PC-3 (cell line): ENCODE measurements at regions of chr12 and their contacts with region 1.

Region 1: GRCh38 chr12:19572920-19573558 is 133.7 kb downstream of the AEBP2 start:
- DNase-seq: peak; percentile 70
- ATAC-seq: peak; percentile 67
- H3K4me3 ChIP-seq: no peak overlapping the region
- H3K27ac ChIP-seq: no peak overlapping the region
- H3K4me1 ChIP-seq: peaks cover 7% of the 10 kb centered on the region; the same call in 1 of the 2 replicates
- H3K27me3 ChIP-seq: no peaks in the 10 kb centered on the region
- CTCF ChIP-seq: peak; percentile 77

Region 2: DNA sequence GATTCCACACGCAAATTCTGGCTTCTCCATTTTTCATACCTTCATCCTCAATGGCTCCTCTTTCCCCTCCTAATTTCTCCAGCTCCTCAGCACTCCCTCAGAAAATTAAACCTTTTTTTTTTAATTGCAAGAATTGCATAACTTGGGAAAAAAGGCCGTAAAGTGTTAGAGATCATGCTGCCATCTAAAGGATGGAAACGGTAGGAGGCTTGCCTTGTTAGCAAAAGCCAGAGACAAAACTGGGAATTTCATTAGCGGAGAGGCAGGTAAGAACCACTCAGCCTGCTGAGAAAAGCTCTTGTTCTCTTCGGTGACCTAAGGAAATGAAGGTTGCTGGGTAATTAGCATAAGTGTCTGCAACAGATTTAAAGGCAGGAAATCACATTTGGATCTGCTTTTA is 70.6 kb after region 1 on chr12:
- CTCF ChIA-PET with region 1: no interaction called
- POLR2A ChIA-PET with region 1: no interaction called
- intact Hi-C with region 1: loop called (anchors 1 kb)
- DNase-seq: peak; percentile 50
- ATAC-seq: peak; percentile 60
- H3K4me3 ChIP-seq: no peak overlapping the region
- H3K27ac ChIP-seq: no peak overlapping the region
- H3K4me1 ChIP-seq: no peaks in the 10 kb centered on the region
- H3K27me3 ChIP-seq: no peaks in the 10 kb centered on the region
- CTCF ChIP-seq: peak; percentile 64